ENCODE measurements at regions of chr16 and their contacts with region 1.

Region 1: GRCh38 chr16:1960665-1961630 is 1.6 kb downstream of the NDUFB10 start:
- DNase-seq: no peak
- ATAC-seq: no peak
- H3K4me3 ChIP-seq: peak overlapping the region in 10 of 12 donors; percentile 69 to 100 (median 92)
- H3K27ac ChIP-seq: peak overlapping the region in 9 of 12 donors; percentile 11 to 99 (median 94)
- H3K4me1 ChIP-seq: peaks cover 7 to 51% (median 35%) of the 10 kb centered on the region in 12 donors
- H3K27me3 ChIP-seq: no peaks in the 10 kb centered on the region
- CTCF ChIP-seq: no peak
- POLR2A ChIP-seq: no peak

Region 2: DNA sequence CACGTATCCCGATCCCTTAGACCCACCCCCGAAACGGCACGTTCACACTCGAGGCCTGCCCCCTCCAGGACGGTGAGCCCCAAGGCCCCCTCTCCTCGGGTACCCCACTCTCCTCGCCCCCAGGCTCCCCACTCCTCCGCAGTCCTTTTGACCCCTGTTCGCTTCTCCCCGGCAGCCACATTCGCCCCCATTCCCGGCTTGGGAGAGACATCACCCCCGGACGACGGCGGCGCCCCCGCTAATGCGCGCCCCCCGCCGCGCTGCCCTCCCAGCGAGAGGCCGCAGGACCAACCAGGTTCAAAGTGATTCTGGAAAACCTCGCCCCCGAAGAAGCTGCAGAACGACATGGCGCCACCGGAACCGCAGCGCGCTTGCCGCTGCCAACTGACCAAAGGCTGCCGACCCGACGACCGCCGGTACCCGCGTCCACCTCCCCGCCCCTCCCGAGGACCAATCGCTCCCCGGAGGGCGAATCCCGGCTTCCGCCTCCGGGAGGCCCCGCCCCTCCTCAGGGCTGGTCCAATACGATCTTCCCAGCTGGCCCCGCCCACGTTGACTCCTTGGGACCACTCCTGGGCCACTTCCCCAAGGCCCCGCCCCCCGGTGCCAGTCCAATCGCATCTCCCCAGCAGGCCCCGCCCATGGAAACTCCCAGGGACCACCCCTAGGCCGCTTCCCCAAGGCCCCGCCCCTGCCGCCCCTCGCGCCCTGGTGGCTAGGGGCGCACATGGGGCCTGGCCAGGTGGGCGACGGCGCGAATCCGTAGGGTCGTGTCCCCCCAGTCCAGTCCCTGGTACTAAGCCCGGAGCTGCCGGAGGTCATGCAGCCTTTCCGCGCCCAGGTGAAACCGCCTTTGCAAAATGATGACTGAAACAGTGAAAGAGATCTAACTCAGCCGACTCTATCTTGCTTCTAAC is 17.9 kb before region 1 on chr16 and contains the start of gene MSRB1:
- intact Hi-C with region 1: loop called in 1 of 10 experiments (anchors 1 kb)
- DNase-seq: peak; percentile 100
- ATAC-seq: peak; percentile 91 to 96 (median 93)
- H3K4me3 ChIP-seq: peak within 1 kb of the TSS; percentile 50 to 88 (median 78)
- H3K27ac ChIP-seq: peak within 1 kb of the TSS in 11 of 12 donors; percentile 77 to 89 (median 81)
- H3K4me1 ChIP-seq: peaks cover 0 to 30% (median 16%) of the 10 kb centered on the region in 12 donors
- H3K27me3 ChIP-seq: no peaks in the 10 kb centered on the region
- CTCF ChIP-seq: no peak
- POLR2A ChIP-seq: peak; percentile 90 to 98
- total RNA-seq, gene MSRB1: 12.4 to 49.2 (median 31.1) TPM

Region 3: DNA sequence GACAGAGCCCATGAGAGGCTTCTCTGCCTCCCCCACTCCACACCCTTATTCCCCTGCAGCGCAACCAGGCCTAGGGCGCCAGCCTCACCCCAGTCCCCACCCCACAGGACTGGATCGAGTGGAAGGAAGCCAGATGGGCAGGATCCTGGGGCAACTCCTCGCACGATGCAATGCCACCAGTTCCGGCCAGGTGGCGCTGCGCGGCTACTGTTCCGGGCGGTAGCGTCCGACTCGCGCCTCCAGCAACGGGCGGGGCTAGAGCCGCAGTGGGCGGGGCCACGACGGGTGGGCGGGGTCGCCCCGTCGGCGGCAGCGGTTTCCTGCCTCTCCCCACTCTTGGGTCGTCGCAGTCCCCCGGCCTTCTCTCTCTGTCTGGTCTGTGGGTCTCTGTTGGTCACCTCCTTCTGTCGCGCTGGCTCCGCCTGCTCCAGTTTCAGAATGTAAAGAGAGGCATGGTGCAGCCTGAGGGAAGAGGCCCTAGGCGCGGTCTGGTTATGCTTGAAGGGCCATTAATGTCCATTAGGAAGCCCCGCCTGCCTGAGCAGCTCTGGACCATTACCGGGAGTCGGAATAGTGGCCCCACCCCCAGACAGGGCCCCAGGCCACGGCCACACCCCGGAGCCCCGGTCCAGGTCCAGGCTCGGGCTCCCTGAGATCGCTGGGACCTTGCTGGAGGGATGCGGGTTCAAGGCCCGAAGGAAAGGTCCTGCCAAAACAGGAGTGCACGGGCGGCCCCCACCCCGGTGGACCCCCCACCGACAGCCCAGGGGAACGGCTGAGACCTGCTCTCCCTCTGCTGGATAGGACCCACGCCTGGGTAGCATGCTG is 62.4 kb after region 1 on chr16:
- intact Hi-C with region 1: no loop called
- DNase-seq: peak; percentile 92 to 97 (median 94)
- ATAC-seq: peak; percentile 85 to 93 (median 86)
- H3K4me3 ChIP-seq: peak overlapping the region in 10 of 12 donors; percentile 3 to 47 (median 42)
- H3K27ac ChIP-seq: peak overlapping the region; percentile 39 to 97 (median 82)
- H3K4me1 ChIP-seq: peaks cover 0 to 65% (median 50%) of the 10 kb centered on the region in 12 donors
- H3K27me3 ChIP-seq: peaks cover 10 to 47% (median 32%) of the 10 kb centered on the region in 9 donors
- CTCF ChIP-seq: peak; percentile 90 to 99 (median 96)
- POLR2A ChIP-seq: peak in 1 of 2 donors; percentile 81

Measured in heart left ventricle (tissue), 16 donors.